Activated T-helper 2 cell treated with anti-CD3 and anti-CD28 coated beads, Interferon-gamma antibody, Interleukin-2, Interleukin-4, amounts not matched to agents 10 μg/mL and 5 μg/mL and 100 μg/mL, durations not matched to agents 14 hours and 24 hours and 36 hours (primary cell): ENCODE measurements at regions of chr11 and their contacts with region 1.

Region 1: GRCh38 chr11:96155627-96156378 is 187.2 kb downstream of the MAML2 start:
- DNase-seq: peak; percentile 25
- H3K4me3 Mint-ChIP-seq: peak overlapping the region; percentile 43
- H3K27ac Mint-ChIP-seq: peak overlapping the region; percentile 96
- H3K4me1 Mint-ChIP-seq: peaks cover 49% of the 10 kb centered on the region
- H3K27me3 Mint-ChIP-seq: no peaks in the 10 kb centered on the region

Region 2: GRCh38 chr11:96054870-96055705 is 100.7 kb before region 1 on chr11:
- intact Hi-C with region 1: loop called (anchors 1 kb)
- DNase-seq: no peak
- H3K4me3 Mint-ChIP-seq: no peak overlapping the region
- H3K27ac Mint-ChIP-seq: no peak overlapping the region
- H3K4me1 Mint-ChIP-seq: peaks cover 53% of the 10 kb centered on the region
- H3K27me3 Mint-ChIP-seq: no peaks in the 10 kb centered on the region

Region 3: GRCh38 chr11:96075532-96075959 is 80.3 kb before region 1 on chr11:
- intact Hi-C with region 1: loop called (anchors 1 kb)
- DNase-seq: no peak
- H3K4me3 Mint-ChIP-seq: peak overlapping the region; percentile 40
- H3K27ac Mint-ChIP-seq: peak overlapping the region; percentile 84
- H3K4me1 Mint-ChIP-seq: peaks cover 58% of the 10 kb centered on the region
- H3K27me3 Mint-ChIP-seq: no peaks in the 10 kb centered on the region

Region 4: DNA sequence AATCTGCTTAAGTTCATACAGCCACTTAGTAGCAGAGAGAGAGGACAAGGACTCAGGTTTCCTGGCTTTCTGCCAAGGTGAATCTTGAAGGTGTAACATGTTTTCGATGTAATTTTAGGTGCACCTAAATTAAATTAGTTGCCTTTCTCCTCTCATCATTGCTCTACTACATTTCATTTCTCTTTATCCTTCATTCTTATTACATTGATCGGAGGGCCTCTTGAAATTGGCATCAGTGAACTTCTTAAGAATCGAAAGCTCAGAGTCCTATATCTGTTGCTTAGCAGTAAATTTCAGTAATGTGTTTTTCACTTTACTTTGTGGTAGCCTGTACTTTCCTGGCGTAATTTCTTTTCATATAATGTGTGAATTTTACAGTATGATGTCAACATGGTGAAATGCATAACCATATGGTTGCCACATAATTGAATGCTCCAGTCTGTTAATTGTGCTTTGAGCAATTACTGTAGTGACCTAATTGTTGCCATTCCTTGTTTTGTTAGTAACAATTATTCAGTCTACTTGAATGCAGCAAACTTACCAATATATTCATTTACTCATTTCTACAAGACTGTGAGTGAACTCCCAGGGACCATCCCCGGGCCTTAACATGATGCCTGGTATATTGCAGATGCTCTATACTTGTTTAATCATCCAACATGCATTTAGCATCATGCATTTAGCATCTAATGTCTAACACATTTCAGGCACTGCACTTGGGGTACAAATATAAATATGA is 49.1 kb after region 1 on chr11:
- intact Hi-C with region 1: no loop called
- DNase-seq: no peak
- H3K4me3 Mint-ChIP-seq: peak overlapping the region; percentile 19
- H3K27ac Mint-ChIP-seq: peak overlapping the region; percentile 85
- H3K4me1 Mint-ChIP-seq: peaks cover 64% of the 10 kb centered on the region
- H3K27me3 Mint-ChIP-seq: no peaks in the 10 kb centered on the region

Region 5: DNA sequence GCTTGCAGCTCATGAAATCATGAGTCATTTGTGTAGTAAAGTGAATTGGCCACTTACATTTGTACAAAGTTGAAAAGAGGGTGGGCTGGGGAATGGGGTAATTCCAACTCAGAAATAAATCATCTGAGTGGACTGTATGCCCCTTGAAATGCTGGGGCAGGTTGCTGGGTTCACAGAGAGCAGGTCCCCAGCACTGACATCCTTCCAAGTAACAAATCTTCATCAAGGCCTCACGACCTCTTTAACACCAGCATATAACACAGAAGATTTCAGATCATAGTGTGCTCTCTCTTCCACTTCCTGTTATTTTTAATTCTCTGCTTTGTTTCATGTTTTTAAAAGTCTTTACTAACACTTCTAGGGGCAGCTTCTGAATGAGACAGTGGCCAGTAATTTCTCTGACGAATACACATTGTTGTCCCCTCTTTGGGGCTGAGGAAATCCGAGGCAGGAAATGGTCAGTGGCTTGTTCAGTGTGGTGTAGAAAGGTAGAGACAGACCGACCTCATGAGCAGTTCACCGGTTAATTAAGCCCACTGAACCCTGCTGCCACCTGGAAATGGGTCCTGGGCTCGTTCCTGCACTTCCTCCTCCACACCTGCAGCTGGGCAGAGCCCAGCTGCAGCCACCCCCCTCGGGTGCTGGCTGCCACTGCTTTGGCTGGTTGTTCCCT is 59.4 kb after region 1 on chr11:
- intact Hi-C with region 1: loop called (anchors 1 kb)
- DNase-seq: peak; percentile 17
- H3K4me3 Mint-ChIP-seq: peak overlapping the region; percentile 53
- H3K27ac Mint-ChIP-seq: peak overlapping the region; percentile 92
- H3K4me1 Mint-ChIP-seq: peaks cover 55% of the 10 kb centered on the region
- H3K27me3 Mint-ChIP-seq: no peaks in the 10 kb centered on the region